Ovary (tissue), 10 donors: ENCODE measurements at regions of chr2 and their contacts with region 1.

Region 1: DNA sequence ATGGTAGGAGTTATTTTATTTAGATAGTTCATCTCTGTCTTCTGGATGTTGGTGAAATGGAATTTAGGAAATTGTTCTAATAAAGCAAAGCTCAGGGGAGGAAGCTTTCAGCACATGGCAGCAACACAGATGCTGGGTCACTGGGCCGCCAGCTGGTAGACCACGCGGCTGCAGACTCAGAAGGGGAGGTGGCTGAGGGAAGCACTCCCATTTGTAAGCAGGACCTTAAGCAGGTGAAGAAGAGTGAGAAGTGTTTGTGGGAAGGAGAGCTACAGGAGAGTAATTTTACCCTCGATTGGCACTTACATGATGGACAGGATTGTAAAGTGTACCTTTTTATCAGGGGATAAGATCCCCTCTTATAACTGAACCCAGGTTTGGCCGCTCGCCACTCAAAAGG is 24.4 kb downstream of the NMS start:
- DNase-seq: no peak
- H3K4me3 ChIP-seq: no peak overlapping the region
- H3K27ac ChIP-seq: no peak overlapping the region
- H3K4me1 ChIP-seq: no peaks in the 10 kb centered on the region
- H3K27me3 ChIP-seq: no peaks in the 10 kb centered on the region
- CTCF ChIP-seq: no peak
- EP300 ChIP-seq: no peak
- POLR2A ChIP-seq: no peak

Region 2: DNA sequence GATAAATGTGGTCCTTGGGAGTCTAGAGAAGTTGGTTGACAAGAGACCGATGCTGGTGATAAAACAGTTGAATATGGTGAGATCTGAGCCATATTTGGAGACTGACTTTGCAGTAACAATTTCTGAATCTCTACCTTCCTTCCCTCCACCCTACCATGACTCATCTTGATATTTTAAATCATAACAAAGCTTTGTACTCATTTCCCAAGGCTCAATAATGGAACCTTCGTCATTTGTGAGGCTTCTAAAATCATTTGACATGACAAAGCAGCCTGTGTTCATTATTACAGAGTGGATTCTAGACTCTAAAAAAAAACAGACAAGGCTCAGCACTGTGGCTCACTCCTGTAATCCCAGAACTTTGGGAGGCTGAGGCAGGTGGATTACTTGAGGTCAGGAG is 29.6 kb after region 1 on chr2:
- intact Hi-C with region 1: loop called in 1 of 4 experiments (anchors 1 kb)
- DNase-seq: no peak
- H3K4me3 ChIP-seq: no peak overlapping the region
- H3K27ac ChIP-seq: no peak overlapping the region
- H3K4me1 ChIP-seq: no peaks in the 10 kb centered on the region
- H3K27me3 ChIP-seq: no peaks in the 10 kb centered on the region
- CTCF ChIP-seq: no peak
- EP300 ChIP-seq: no peak
- POLR2A ChIP-seq: no peak